Brain microvascular endothelial cell (primary cell): ENCODE measurements at regions of chr1 and their contacts with region 1.

Region 1: GRCh38 chr1:25997828-25998761 is at the start of gene PAFAH2:
- DNase-seq: peak; percentile 98
- H3K4me3 ChIP-seq: peak within 1 kb of the TSS; percentile 65
- H3K27ac ChIP-seq: peak within 1 kb of the TSS; percentile 60
- H3K27me3 ChIP-seq: no peaks in the 10 kb centered on the region
- CTCF ChIP-seq: peak; percentile 99

Region 2: GRCh38 chr1:25895365-25895993 is 102.6 kb before region 1 on chr1:
- in situ Hi-C with region 1: loop called (anchors 10 kb)
- DNase-seq: peak; percentile 90
- H3K4me3 ChIP-seq: no peak overlapping the region
- H3K27ac ChIP-seq: no peak overlapping the region
- H3K27me3 ChIP-seq: no peaks in the 10 kb centered on the region
- CTCF ChIP-seq: peak; percentile 99

Region 3: GRCh38 chr1:25906644-25907300 is 91.3 kb before region 1 on chr1:
- in situ Hi-C with region 1: no loop called
- DNase-seq: no peak
- H3K4me3 ChIP-seq: peak overlapping the region; percentile 80
- H3K27ac ChIP-seq: no peak overlapping the region
- H3K27me3 ChIP-seq: no peaks in the 10 kb centered on the region
- CTCF ChIP-seq: no peak

Region 4: GRCh38 chr1:26045722-26046248 is 47.7 kb after region 1 on chr1 and contains the start of gene SLC30A2:
- in situ Hi-C with region 1: no loop called
- DNase-seq: no peak
- H3K4me3 ChIP-seq: no peak within 1 kb of the TSS
- H3K27ac ChIP-seq: no peak within 1 kb of the TSS
- H3K27me3 ChIP-seq: peaks cover 65% of the 10 kb centered on the region
- CTCF ChIP-seq: no peak

Region 5: DNA sequence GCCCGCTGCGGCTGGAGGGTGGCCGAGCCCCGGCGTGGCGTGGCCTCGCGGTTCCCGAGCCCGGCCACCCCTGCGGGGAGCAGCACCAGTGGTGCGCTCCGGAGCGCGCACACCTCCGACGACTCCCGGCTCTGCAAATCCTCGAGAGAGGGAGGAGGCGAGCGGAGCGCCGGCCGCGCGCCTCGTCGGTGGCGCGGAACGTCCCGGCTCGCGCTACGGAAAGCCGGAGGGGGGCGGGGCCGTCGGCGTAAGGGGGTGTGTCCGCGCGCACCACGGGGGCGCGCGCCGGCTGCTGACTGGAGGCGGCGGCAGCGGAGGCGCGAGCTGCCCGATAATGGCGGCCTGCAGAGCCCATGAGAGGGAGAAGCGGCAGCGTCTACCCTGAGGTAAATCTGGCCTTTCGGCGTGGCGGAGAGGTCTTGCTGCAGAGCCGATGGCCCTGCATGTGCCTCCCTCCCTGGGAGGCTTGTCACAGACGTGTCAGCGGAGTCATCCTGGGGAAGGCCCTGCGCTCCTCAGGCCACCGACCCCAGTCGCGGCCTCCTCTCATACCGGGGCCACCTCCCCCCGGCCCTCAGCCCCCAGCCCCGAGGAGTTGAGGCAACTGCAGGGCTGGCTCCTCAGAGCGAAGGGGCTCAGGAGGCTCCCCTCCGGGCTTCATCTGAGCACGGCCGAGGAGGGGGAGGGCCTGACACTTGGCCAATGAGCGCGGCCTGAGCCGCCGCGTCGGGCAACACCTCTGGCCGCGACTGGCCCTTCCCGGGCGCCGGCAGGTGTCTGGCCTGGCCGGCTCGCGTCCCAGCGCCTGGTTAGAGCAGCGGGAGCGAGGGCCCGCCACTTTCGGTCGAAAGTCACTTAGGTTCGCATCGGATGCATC is 113.7 kb after region 1 on chr1 and contains the start of gene PDIK1L:
- in situ Hi-C with region 1: no loop called
- DNase-seq: peak; percentile 88
- H3K4me3 ChIP-seq: peak within 1 kb of the TSS; percentile 94
- H3K27ac ChIP-seq: peak within 1 kb of the TSS; percentile 54
- H3K27me3 ChIP-seq: no peaks in the 10 kb centered on the region
- CTCF ChIP-seq: no peak

Region 6: DNA sequence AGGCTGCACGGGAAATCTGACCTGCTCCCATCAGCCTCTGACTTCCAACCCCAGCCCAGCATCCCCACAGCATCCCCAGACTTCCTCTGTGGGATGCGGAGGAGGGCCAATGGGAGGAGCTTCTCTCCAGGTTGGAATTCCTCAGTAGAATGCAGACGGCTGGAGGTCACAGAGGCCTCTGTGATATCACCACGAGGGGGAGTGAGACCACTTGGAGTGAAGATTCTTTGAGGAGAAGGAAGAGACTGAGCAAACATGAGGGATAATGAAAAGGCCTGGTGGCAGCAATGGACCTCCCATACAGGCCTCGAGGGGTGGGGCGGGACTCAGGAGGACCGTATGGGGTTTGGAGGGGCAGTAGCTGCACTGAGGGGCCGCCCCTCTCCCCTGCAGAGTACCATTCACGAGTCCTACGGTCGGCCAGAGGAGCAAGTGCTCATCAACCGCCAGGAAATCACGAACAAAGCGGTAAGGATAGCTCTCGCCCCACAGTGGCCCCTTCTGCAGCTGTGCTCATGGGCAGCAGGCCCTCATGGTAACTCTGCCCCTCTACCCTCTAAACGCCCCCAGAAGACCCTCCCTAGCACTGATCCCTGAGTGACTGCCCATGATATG is 192.4 kb after region 1 on chr1 and contains the start of gene CATSPER4:
- in situ Hi-C with region 1: no loop called
- DNase-seq: no peak
- H3K4me3 ChIP-seq: no peak within 1 kb of the TSS
- H3K27ac ChIP-seq: no peak within 1 kb of the TSS
- H3K27me3 ChIP-seq: no peaks in the 10 kb centered on the region
- CTCF ChIP-seq: peak; percentile 32